ENCODE measurements at regions of chr6 and their contacts with region 1.

Region 1: DNA sequence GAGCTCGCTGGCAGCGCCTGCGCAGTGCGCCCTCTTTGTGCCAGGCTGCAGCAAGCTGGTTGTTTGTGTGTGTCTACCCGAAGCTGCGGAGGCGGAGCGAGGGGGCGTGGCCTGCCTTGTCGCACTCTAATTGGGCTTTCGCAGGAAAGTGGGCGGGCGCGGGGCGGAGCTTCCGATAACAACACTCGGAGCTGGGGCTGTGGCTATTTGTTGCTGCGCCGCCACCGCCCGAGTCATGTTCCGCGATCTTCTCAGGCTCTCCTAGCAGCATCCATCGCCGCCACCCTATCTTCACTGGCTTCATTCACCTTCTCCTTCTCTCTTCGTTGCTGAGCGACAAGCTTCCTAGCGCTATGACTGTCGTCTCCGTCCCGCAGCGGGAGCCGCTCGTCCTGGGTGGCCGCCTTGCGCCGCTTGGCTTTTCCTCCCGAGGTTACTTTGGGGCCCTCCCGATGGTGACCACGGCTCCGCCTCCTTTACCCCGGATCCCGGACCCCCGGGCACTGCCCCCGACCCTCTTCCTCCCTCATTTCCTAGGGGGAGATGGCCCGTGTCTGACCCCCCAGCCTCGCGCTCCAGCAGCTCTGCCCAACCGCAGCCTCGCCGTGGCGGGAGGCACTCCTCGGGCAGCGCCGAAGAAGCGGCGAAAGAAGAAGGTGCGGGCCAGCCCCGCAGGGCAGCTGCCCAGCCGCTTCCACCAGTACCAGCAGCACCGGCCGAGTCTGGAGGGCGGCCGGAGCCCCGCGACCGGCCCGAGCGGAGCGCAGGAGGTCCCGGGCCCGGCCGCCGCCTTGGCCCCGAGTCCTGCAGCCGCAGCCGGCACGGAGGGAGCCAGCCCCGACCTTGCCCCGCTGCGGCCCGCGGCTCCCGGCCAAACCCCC is at the start of gene PNRC1:
- H3K4me3 ChIP-seq: peak within 1 kb of the TSS; percentile 99
- H3K27ac ChIP-seq: peak within 1 kb of the TSS; percentile 99
- H3K4me1 ChIP-seq: peaks cover 9% of the 10 kb centered on the region; the same call in 1 of the 2 replicates
- CTCF ChIP-seq: peak; percentile 53; the same call in 1 of the 2 replicates

Region 2: DNA sequence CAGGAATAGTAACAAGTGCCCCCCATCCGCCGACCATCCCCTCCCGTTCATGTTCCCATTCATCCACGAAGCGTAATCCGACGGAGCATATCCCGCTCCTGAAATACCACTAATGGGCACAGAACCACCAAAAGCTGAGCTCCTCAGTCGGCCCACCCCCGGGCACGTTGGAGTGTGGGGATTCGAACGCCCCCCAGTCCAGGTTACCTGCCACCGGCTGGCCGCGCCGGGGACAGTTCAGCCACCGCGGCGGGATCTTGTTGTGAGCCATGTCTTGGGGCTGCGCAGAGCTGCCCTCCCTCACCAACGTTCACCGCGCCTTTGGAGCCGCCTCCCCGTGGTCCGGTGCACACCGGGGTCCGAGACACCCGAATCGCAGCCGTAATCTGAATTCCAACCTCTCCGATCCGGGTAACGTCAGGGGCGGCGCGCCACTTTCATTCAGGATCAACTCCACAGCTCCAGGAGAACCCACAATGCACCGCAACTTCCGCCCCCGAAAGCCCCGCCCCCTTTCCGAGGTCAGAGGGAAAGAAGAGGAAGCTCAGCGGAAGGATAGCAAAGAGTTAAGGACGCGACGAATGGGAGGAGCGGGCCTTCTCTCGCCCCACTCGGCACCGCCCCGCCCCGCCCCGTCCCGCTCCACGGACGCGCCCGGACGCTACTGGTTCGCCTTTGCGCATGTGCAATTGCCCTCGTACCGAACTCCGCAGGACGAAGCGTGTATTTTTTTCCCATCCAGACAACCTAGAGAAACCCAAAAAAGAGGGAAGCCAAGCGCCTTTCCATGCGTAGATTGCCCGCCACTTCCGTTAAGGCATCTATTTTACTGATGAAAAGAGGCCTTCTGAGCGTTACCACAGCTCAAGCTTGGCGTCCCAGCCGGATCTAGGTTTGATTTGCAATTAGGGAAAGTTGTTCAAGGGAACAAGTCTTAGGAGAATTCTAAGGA is 117.4 kb before region 1 on chr6 and contains the start of gene RNGTT:
- CTCF ChIA-PET with region 1: no interaction called
- POLR2A ChIA-PET with region 1: interaction called, 25 read pairs
- H3K4me3 ChIP-seq: peak within 1 kb of the TSS; percentile 98
- H3K27ac ChIP-seq: peak within 1 kb of the TSS; percentile 77
- H3K4me1 ChIP-seq: no peaks in the 10 kb centered on the region
- CTCF ChIP-seq: peak; percentile 63; the same call in 1 of the 2 replicates

Region 3: DNA sequence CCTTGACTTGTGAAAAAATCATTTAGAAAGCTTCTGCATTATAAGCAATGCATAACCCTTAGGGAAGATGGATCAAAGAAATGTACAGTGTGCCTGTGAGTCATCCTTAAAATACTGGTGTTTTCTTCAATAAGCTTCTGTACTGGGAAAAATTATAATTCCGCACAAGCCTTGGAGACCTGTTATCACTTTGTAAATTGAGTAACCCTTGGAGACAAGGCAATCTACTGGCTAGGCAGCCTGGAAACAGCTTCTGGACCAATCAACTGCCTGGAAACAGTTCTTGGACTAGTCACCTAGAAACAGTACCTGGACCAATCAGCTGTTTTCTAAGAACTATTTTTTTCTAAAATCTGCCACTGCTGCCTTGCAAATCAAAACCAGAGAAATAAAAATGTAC is 91.6 kb before region 1 on chr6:
- CTCF ChIA-PET with region 1: interaction called, 19 read pairs
- POLR2A ChIA-PET with region 1: interaction called, 39 read pairs
- H3K4me3 ChIP-seq: no peak overlapping the region
- H3K27ac ChIP-seq: no peak overlapping the region
- H3K4me1 ChIP-seq: no peaks in the 10 kb centered on the region
- CTCF ChIP-seq: no peak

Region 4: DNA sequence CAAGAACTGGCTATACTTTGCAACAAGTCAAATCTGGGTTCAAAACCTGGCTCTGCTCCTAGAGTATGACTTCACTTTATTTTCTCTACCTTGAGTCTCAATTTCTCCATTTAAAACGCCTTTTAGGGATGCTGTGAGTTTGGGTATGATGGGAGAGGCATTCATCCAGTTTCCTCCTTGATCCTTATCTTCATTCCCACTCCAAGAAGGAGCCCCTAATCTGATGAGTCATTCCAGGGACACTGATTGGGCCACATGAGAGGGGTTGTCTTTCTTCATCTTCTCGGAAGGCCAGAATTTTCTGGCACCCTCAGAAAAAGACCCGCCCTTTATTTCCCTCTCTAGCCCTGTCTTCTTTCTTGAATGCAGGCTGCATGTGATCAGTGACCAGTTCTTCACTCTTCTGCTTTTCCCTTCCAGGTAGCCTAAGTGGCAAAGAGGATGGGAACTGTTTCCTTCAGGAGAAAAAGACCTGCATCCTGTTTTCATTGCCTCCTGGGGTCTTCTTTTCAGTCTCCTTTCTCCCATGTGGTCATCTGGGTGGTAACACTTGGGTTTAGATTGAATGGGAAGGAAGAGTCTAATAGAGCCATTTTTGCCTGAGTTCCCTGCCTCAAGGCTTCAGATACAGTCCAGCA is 32.4 kb before region 1 on chr6:
- CTCF ChIA-PET with region 1: no interaction called
- POLR2A ChIA-PET with region 1: interaction called, 11 read pairs
- H3K4me3 ChIP-seq: no peak overlapping the region
- H3K27ac ChIP-seq: no peak overlapping the region
- H3K4me1 ChIP-seq: peaks cover 11% of the 10 kb centered on the region
- CTCF ChIP-seq: no peak

Region 5: GRCh38 chr6:89117211-89118108 is 36.7 kb after region 1 on chr6 and contains the start of gene SRSF12:
- CTCF ChIA-PET with region 1: interaction called, 9 read pairs
- POLR2A ChIA-PET with region 1: interaction called, 84 read pairs
- H3K4me3 ChIP-seq: peak within 1 kb of the TSS; percentile 58
- H3K27ac ChIP-seq: peak within 1 kb of the TSS; percentile 65; the same call in 1 of the 2 replicates
- H3K4me1 ChIP-seq: peaks cover 3% of the 10 kb centered on the region; the same call in 1 of the 2 replicates
- CTCF ChIP-seq: no peak; the same call in 1 of the 2 replicates

Region 6: GRCh38 chr6:89140347-89141156 is 59.8 kb after region 1 on chr6:
- CTCF ChIA-PET with region 1: interaction called, 3 read pairs
- POLR2A ChIA-PET with region 1: interaction called, 48 read pairs
- H3K4me3 ChIP-seq: no peak overlapping the region
- H3K27ac ChIP-seq: peak overlapping the region; percentile 7; the same call in 1 of the 2 replicates
- H3K4me1 ChIP-seq: peaks cover 44% of the 10 kb centered on the region
- CTCF ChIP-seq: no peak

Region 7: DNA sequence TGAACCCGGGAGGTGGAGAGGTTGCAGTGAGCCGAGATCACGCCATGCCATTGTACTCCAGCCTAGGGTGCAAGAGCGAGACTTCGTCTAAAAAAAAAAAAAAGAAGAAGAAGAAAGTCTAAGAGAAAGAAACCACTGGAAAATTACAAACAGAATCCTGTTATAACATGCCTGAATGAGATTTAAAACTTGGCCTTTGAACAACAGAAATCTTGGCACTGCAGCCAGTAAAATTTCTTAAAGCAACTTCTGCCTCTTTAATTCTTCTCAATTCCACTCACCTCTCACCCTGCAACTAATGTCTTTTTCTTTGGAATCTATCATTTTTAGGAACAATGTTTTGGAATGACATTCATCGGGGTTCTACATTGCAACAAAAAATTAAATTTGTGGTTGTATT is 91.3 kb after region 1 on chr6:
- CTCF ChIA-PET with region 1: no interaction called
- POLR2A ChIA-PET with region 1: no interaction called
- H3K4me3 ChIP-seq: no peak overlapping the region
- H3K27ac ChIP-seq: no peak overlapping the region
- H3K4me1 ChIP-seq: no peaks in the 10 kb centered on the region
- CTCF ChIP-seq: no peak

Region 8: DNA sequence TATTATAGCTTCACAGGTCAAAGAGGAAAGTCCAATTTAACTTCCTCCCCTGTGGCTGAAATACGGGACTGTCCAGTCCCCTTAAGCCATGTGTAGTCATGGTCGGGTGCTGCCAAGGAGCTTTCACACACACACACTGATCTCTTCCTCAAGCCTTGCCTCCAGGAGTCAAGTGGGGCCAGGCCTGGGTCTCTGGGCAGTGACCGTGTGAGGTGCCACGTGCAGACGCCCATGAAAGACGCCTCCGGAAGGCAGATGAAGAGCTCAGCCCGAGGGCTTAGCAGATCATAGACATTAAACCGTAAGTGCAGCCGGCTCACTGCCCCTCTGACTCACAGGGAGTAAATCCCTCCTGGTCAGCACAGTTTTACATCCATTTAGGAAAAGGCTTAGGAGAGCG is 230.1 kb after region 1 on chr6:
- CTCF ChIA-PET with region 1: no interaction called
- POLR2A ChIA-PET with region 1: no interaction called
- H3K4me3 ChIP-seq: no peak overlapping the region
- H3K27ac ChIP-seq: no peak overlapping the region
- H3K4me1 ChIP-seq: peaks cover 12% of the 10 kb centered on the region
- CTCF ChIP-seq: no peak

Region 9: GRCh38 chr6:89352278-89353117 is 271.7 kb after region 1 on chr6 and contains the start of gene UBE2J1:
- CTCF ChIA-PET with region 1: no interaction called
- POLR2A ChIA-PET with region 1: interaction called, 18 read pairs
- H3K4me3 ChIP-seq: peak within 1 kb of the TSS; percentile 91
- H3K27ac ChIP-seq: peak within 1 kb of the TSS; percentile 99
- H3K4me1 ChIP-seq: peaks cover 15% of the 10 kb centered on the region
- CTCF ChIP-seq: peak; percentile 89

Measured in HEK293 (cell line).